CD4-positive, alpha-beta memory T cell (primary cell): ENCODE measurements at regions of chr9 and their contacts with region 1.

Region 1: DNA sequence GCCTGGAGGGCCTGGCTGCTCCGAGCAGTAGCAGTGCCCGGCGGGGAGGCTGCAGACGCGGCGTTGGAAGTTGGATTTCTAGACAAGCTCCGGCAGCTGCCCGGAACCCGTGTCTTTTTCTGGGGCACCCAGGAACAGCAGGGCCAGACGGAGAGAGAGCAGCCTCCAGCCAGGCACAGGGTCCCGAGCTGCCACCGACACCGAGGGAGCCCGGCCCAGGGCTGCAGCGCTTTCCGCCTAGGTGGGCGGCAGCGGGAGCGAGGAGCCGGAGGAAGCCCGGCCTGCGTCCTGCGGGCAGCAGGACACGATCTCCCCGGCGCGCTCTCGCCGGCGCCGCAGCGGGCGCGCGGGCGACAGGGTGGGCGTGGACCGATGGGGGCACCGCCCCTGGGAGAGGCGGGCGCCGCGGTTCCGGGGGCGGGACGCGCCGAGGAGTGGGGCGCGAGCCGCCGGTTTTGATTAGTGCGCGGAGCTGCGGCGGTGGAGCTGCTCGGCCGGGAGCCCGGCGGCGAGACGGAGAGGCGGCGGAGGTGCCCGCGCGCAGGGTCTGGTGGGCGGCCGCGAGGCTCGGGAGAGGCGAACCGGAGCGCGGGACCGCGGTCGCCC is at the start of gene UGCG:
- DNase-seq: peak; percentile 84 to 92 (median 89)
- H3K4me3 ChIP-seq: peak within 1 kb of the TSS; percentile 87 to 97
- H3K4me3 Mint-ChIP-seq: peak within 1 kb of the TSS; percentile 90 to 96 (median 93)
- H3K27ac ChIP-seq: peak within 1 kb of the TSS; percentile 70
- H3K27ac Mint-ChIP-seq: peak within 1 kb of the TSS; percentile 91 to 97 (median 95)
- H3K4me1 ChIP-seq: peaks cover 58% of the 10 kb centered on the region
- H3K4me1 Mint-ChIP-seq: peaks cover 23 to 32% (median 31%) of the 10 kb centered on the region in 4 donors
- H3K27me3 ChIP-seq: no peaks in the 10 kb centered on the region
- H3K27me3 Mint-ChIP-seq: no peaks in the 10 kb centered on the region
- total RNA-seq, gene UGCG: 26.3 to 29.7 TPM

Region 2: GRCh38 chr9:111759762-111760639 is 136.5 kb before region 1 on chr9:
- CTCF ChIA-PET with region 1: interaction called, 3 read pairs
- POLR2A ChIA-PET with region 1: interaction called, 4 read pairs
- intact Hi-C with region 1: loop called (anchors 2 kb)
- DNase-seq: peak; percentile 56 to 70 (median 68)
- H3K4me3 ChIP-seq: no peak overlapping the region
- H3K4me3 Mint-ChIP-seq: no peak overlapping the region
- H3K27ac ChIP-seq: no peak overlapping the region
- H3K27ac Mint-ChIP-seq: no peak overlapping the region
- H3K4me1 ChIP-seq: no peaks in the 10 kb centered on the region
- H3K4me1 Mint-ChIP-seq: peaks cover 0 to 4% (median 2%) of the 10 kb centered on the region in 4 donors
- H3K27me3 ChIP-seq: no peaks in the 10 kb centered on the region
- H3K27me3 Mint-ChIP-seq: no peaks in the 10 kb centered on the region

Region 3: DNA sequence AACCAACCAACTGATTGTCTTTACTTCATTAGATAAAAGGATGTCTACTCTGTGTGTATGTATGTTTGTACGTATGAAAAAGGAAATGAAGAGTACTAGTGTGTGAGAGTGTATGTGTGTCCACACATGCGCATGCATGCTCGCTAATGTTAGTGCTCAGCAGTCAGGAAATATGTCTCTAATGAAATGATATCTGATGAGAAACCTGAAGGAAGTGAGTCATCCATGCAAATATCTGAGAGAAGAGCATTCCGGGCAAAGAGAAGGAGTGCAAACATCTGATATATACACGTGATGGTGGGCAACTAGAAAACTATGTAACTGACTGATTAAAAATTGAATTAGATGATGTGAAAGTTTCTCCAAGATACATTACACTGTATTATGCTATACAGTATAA is 29.5 kb before region 1 on chr9:
- CTCF ChIA-PET with region 1: no interaction called
- POLR2A ChIA-PET with region 1: interaction called, 3 read pairs
- intact Hi-C with region 1: loop called (anchors 2 kb)
- DNase-seq: peak; percentile 19 to 58 (median 44)
- H3K4me3 ChIP-seq: no peak overlapping the region
- H3K4me3 Mint-ChIP-seq: peak overlapping the region in 6 of 8 donors; percentile 7 to 62 (median 20)
- H3K27ac ChIP-seq: no peak overlapping the region
- H3K27ac Mint-ChIP-seq: peak overlapping the region in 5 of 7 donors; percentile 1 to 65 (median 7)
- H3K4me1 ChIP-seq: no peaks in the 10 kb centered on the region
- H3K4me1 Mint-ChIP-seq: peaks cover 5 to 24% (median 10%) of the 10 kb centered on the region in 4 donors
- H3K27me3 ChIP-seq: no peaks in the 10 kb centered on the region
- H3K27me3 Mint-ChIP-seq: no peaks in the 10 kb centered on the region

Region 4: GRCh38 chr9:111916234-111916645 is 19.8 kb after region 1 on chr9:
- CTCF ChIA-PET with region 1: interaction called, 7 read pairs
- POLR2A ChIA-PET with region 1: interaction called, 92 read pairs
- intact Hi-C with region 1: loop called (anchors 1 kb)
- DNase-seq: no peak
- H3K4me3 ChIP-seq: no peak overlapping the region
- H3K4me3 Mint-ChIP-seq: peak overlapping the region in 7 of 8 donors; percentile 60 to 84 (median 77)
- H3K27ac ChIP-seq: no peak overlapping the region
- H3K27ac Mint-ChIP-seq: peak overlapping the region in 5 of 7 donors; percentile 57 to 86 (median 77)
- H3K4me1 ChIP-seq: peaks cover 52% of the 10 kb centered on the region
- H3K4me1 Mint-ChIP-seq: peaks cover 41 to 71% (median 55%) of the 10 kb centered on the region in 4 donors
- H3K27me3 ChIP-seq: no peaks in the 10 kb centered on the region
- H3K27me3 Mint-ChIP-seq: no peaks in the 10 kb centered on the region

Region 5: DNA sequence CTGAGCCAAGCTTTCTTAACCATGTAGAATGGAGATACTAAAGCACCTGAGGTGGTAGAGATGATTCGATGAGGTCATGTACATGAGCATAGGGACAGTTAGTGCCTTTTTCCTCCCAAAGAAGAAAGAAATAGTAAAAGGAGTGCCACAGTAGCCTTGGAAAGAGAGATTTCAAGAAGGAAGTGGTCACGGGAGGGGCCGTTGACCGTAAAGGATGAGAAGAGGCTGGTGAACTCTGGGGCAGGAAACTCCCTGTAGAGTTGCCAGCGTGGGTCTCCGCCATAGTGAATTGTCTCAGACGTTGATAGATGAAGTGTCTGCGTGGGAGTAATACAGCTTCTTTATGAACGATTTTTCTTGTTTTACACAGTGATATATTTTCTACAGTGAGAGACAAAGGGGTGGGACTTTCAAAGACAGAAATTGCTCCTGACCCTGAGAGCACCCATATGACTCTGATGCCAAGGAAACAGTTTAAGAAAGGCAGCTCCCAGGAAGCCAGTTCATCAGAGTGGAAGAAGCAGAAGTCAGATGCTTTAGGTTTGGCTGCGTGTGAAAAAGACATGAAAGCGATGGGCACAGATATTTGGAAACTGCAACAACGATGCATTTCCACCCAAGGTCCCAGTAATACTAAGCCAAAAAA is 41.4 kb after region 1 on chr9:
- CTCF ChIA-PET with region 1: no interaction called
- POLR2A ChIA-PET with region 1: interaction called, 35 read pairs
- intact Hi-C with region 1: no loop called
- DNase-seq: peak; percentile 56 to 79 (median 60)
- H3K4me3 ChIP-seq: peak overlapping the region in 1 of 2 donors; percentile 42
- H3K4me3 Mint-ChIP-seq: peak overlapping the region; percentile 57 to 93 (median 82)
- H3K27ac ChIP-seq: peak overlapping the region; percentile 39
- H3K27ac Mint-ChIP-seq: peak overlapping the region; percentile 74 to 97 (median 96)
- H3K4me1 ChIP-seq: peaks cover 31% of the 10 kb centered on the region
- H3K4me1 Mint-ChIP-seq: peaks cover 25 to 41% (median 33%) of the 10 kb centered on the region in 4 donors
- H3K27me3 ChIP-seq: no peaks in the 10 kb centered on the region
- H3K27me3 Mint-ChIP-seq: no peaks in the 10 kb centered on the region

Region 6: DNA sequence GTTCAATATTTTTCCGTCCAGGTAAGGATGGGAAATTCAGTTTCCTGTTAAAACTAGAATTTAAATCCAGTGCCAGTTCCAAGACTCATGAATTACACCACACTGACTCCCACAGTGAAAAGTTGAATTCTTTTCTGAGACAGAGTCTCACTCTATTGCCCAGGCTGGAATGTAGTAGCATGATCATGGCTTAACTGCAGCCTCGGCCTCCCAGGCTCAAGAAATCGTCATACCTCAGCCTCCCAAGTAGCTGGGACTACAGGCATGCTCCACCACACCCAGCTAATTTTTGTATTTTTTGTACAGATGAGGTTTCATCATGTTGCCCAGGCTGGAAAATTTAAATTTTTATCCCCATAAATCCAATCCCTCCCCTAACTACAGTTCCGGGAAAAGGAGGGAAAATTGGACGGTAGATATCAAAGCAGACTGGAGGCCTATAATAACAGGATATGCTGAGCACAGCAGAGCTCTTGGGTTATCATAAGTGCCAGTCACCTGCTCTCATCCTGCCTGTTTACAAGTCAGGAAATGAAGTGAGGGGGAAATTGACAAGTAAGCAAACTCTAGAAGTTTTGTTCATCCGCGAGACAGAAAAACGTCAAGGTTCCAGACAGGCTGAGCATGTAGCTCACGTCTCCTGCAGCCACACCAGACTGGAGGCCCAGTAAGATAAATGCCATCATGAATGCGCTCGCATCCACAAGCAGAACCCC is 105.8 kb after region 1 on chr9:
- CTCF ChIA-PET with region 1: no interaction called
- POLR2A ChIA-PET with region 1: interaction called, 34 read pairs
- intact Hi-C with region 1: loop called (anchors 5 kb)
- DNase-seq: peak in 4 of 5 donors; percentile 31 to 58 (median 46)
- H3K4me3 ChIP-seq: no peak overlapping the region
- H3K4me3 Mint-ChIP-seq: peak overlapping the region in 7 of 8 donors; percentile 29 to 70 (median 55)
- H3K27ac ChIP-seq: no peak overlapping the region
- H3K27ac Mint-ChIP-seq: peak overlapping the region; percentile 50 to 95 (median 81)
- H3K4me1 ChIP-seq: peaks cover 35% of the 10 kb centered on the region
- H3K4me1 Mint-ChIP-seq: peaks cover 14 to 34% (median 27%) of the 10 kb centered on the region in 4 donors
- H3K27me3 ChIP-seq: no peaks in the 10 kb centered on the region
- H3K27me3 Mint-ChIP-seq: no peaks in the 10 kb centered on the region

Region 7: DNA sequence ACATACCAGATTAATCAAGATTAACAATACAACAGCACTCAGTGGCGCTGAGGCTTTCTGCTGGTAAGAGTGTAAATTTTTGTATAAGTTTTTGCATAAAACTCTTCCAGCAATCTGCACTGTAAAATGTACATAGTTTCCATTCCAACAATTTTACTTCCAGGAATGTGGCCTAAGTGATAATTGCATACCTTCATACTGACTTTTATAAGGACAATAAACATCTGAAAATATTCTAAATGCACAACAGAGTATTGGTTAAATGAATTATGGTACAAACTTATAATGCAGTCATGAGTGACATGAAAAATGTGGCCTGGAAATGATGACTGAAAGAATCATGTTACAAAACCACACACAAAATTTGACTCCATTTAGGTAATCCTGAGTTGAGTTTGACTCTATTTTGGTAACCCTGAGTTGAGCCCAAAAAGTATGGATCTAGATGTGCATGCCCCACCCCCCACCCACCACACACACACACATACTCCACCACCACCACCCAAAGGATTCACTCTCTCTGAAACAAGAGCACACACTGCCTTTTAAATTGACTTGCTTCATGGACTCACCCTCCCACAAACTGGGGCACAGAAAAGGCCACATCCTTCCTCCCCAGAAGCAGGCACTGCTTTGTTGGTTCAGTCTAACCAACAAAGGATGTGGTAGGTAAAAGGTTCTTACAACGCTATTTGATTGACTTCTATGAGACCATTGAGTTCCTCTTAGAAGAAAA is 141.0 kb after region 1 on chr9:
- CTCF ChIA-PET with region 1: no interaction called
- POLR2A ChIA-PET with region 1: interaction called, 5 read pairs
- intact Hi-C with region 1: loop called (anchors 2 kb)
- DNase-seq: peak; percentile 83 to 90 (median 84)
- H3K4me3 ChIP-seq: peak overlapping the region in 1 of 2 donors; percentile 28
- H3K4me3 Mint-ChIP-seq: peak overlapping the region; percentile 46 to 90 (median 68)
- H3K27ac ChIP-seq: no peak overlapping the region
- H3K27ac Mint-ChIP-seq: peak overlapping the region in 6 of 7 donors; percentile 31 to 90 (median 72)
- H3K4me1 ChIP-seq: peaks cover 56% of the 10 kb centered on the region
- H3K4me1 Mint-ChIP-seq: peaks cover 36 to 73% (median 52%) of the 10 kb centered on the region in 4 donors
- H3K27me3 ChIP-seq: no peaks in the 10 kb centered on the region
- H3K27me3 Mint-ChIP-seq: no peaks in the 10 kb centered on the region